ENCODE measurements at regions of chr6 and their contacts with region 1.

Region 1: DNA sequence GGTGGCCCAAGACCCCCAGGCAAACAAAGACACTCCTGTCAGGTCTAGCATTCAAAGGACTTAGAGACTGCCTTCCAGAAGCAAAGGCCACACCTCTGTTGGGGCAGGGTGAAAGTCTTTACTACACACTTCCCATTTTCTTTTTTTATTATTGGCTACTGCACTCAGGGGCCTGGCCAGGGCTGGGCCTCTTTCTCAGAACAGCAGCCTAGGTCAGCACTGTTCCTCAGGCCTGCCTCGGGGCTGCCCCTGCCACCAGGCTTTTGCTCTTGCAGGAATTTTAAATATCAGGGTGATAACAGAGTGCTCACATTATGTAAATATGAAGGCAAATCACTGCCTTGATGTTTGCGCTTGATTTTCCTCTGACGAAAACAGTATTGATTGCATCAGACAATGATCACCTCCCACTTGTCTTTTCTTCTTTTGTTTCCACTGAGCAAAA is 18.5 kb downstream of the GSTA4 start:
- DNase-seq: peak; percentile 62
- ATAC-seq: peak; percentile 85
- H3K4me3 Mint-ChIP-seq: no peak overlapping the region
- H3K27ac Mint-ChIP-seq: peak overlapping the region; percentile 89
- H3K4me1 Mint-ChIP-seq: peaks cover 37% of the 10 kb centered on the region
- H3K27me3 Mint-ChIP-seq: peaks cover 24% of the 10 kb centered on the region
- CTCF ChIP-seq: no peak

Region 2: DNA sequence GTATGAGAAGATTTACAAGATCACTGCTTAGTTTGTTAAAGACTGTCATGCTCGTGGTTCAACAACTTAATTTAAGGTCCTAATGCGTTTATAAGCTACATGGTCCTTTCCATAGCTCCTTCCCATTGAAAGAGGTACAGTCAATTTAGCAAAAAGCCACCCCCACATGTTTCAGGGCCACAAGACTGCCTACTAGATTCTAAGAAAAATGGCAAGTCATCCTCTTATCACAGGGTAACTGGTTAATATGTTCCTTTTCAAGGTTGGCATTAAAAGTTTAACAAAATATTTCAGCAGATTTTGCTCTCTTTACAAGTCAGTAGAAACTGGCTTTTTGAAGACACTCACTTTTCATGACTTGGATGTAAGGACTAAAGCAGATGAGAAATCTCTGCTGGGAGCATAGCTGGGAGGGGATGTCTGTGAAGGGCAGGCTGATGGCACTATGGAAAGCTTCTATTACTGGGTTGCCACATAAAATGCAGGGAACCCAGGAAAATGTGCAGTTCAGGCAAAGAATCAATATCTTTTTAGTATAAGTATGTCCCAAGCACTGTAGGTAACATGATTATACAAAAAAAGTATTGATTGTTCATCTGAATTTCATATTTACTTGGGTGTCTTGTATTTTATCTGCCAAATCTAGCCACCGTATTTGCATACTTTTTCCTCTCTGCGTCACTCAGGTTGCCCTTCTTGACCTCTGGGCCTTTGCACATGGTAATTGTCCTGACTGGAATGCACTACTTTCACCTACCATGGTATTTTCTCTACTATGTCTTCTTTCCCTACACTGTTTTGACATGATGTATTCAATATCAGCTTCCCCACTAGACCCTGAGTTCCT is 82.6 kb before region 1 on chr6:
- CTCF ChIA-PET with region 1: no interaction called
- POLR2A ChIA-PET with region 1: no interaction called
- intact Hi-C with region 1: loop called (anchors 5 kb)
- DNase-seq: no peak
- ATAC-seq: peak; percentile 34
- H3K4me3 Mint-ChIP-seq: no peak overlapping the region
- H3K27ac Mint-ChIP-seq: no peak overlapping the region
- H3K4me1 Mint-ChIP-seq: peaks cover 8% of the 10 kb centered on the region
- H3K27me3 Mint-ChIP-seq: peaks cover 7% of the 10 kb centered on the region
- CTCF ChIP-seq: no peak